Activated naive CD4-positive, alpha-beta T cell treated with anti-CD3 and anti-CD28 coated beads for 36 hours (primary cell): ENCODE measurements at regions of chr17 and their contacts with region 1.

Region 1: GRCh38 chr17:75182569-75183450 is at the start of gene SUMO2:
- DNase-seq: peak; percentile 97
- H3K4me3 Mint-ChIP-seq: peak within 1 kb of the TSS; percentile 92
- H3K27ac Mint-ChIP-seq: peak within 1 kb of the TSS; percentile 97
- H3K4me1 Mint-ChIP-seq: peaks cover 40% of the 10 kb centered on the region
- H3K27me3 Mint-ChIP-seq: no peaks in the 10 kb centered on the region
- total RNA-seq, gene SUMO2: 633 to 688 TPM

Region 2: DNA sequence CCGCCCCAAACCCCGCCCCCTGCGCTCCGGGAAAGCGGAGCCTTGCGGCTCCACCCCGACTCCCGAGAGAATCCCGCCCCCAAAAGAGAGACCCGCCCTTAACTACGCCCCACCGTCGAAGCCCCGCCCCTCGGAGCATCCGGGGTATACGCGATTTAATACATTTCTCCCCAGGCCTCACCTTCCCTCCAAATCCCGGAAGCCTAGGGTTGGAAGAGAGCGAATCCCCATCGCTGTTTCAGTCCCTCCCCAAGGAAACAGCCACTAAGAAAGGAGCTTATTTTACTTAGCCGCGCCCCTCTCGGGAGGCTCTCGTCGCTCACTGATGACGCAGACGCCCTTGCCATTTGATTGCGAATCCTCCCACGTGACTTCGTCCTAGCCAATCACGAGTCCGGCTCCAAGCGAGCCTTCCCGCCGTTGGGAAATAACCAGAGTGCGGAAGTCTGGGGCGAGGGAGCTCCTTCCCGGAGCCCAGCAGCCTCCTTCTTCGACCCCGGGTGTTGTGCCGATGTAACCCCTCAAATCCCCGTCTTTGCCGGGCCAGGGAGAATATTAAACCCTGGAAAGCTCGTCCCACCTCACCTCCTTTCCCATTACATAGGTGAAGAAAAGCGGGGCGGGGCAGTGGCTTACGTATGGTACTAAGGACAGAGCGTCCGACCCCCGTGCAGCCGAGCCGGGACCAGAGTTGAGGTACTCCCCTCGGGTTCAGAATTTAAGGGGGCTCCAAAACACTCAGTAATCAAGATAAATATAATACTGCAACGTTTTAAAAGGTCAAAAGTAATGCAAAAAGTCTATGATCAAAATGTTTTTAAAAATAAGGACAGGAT is 309.6 kb before region 1 on chr17:
- CTCF ChIA-PET with region 1: no interaction called
- intact Hi-C with region 1: loop called (anchors 1 kb)
- DNase-seq: peak; percentile 100
- H3K4me3 Mint-ChIP-seq: peak overlapping the region; percentile 88
- H3K27ac Mint-ChIP-seq: peak overlapping the region; percentile 91
- H3K4me1 Mint-ChIP-seq: peaks cover 27% of the 10 kb centered on the region
- H3K27me3 Mint-ChIP-seq: no peaks in the 10 kb centered on the region

Region 3: GRCh38 chr17:75046582-75047289 is 136.1 kb before region 1 on chr17 and contains the starts of genes ATP5PD and KCTD2:
- CTCF ChIA-PET with region 1: no interaction called
- intact Hi-C with region 1: loop called (anchors 5 kb)
- DNase-seq: peak; percentile 97
- H3K4me3 Mint-ChIP-seq: peak within 1 kb of the TSS; percentile 97
- H3K27ac Mint-ChIP-seq: peak within 1 kb of the TSS; percentile 89
- H3K4me1 Mint-ChIP-seq: peaks cover 47% of the 10 kb centered on the region
- H3K27me3 Mint-ChIP-seq: no peaks in the 10 kb centered on the region
- total RNA-seq, gene ATP5PD: 227 to 249 TPM
- total RNA-seq, gene KCTD2: 18.7 to 20.8 TPM

Region 4: DNA sequence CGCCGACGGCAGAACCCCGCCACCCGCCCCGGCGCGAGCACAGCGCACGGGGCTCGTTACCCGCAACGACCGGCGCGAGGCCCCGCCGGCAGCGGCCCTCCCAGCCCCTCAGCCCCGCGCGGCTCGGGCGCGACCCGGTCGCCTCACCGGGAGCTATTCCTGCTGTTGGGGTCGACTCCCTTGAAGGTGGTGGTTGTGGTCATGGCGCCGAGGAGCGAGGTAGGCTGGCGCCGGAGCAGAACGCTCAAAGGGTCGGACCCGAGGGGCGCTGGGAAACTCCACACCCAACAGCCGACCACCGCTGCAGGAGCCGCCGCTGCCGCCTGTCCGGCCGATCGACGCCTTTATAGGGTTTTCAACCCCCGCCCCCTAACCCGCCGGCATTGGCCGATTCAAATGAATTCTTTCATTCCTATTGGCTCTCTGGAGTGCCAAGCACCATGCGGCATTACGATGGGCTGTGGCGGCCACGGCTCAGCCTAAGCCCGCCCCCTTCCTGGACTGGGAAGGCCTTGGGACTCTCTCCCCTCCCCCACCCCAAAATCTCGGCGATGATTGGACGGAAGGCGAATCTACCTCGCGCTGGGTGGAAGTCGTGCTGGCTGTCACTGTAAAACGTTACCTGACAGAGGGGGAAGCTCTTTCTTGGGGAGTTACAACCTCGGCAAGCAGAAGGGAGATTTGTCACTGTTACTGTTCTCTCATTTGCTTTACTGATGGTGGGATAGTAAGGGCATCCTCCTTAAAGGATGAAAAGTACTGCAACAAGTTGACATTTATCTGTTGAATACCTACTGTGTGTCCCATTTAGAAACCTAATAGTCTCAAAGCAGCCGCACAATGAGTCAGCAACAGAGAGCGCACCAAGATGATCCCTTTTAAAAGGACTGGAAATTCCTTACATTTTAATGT is 28.4 kb before region 1 on chr17 and contains the start of gene JPT1:
- CTCF ChIA-PET with region 1: no interaction called
- intact Hi-C with region 1: loop called (anchors 1 kb)
- DNase-seq: peak; percentile 100
- H3K4me3 Mint-ChIP-seq: peak within 1 kb of the TSS; percentile 94
- H3K27ac Mint-ChIP-seq: peak within 1 kb of the TSS; percentile 78
- H3K4me1 Mint-ChIP-seq: peaks cover 30% of the 10 kb centered on the region
- H3K27me3 Mint-ChIP-seq: no peaks in the 10 kb centered on the region
- total RNA-seq, gene JPT1: 242 to 258 TPM

Region 5: GRCh38 chr17:75205037-75205792 is 22.4 kb after region 1 on chr17 and contains the start of gene NUP85:
- CTCF ChIA-PET with region 1: interaction called, 64 read pairs
- intact Hi-C with region 1: loop called (anchors 1 kb)
- DNase-seq: peak; percentile 94
- H3K4me3 Mint-ChIP-seq: peak within 1 kb of the TSS; percentile 98
- H3K27ac Mint-ChIP-seq: peak within 1 kb of the TSS; percentile 98
- H3K4me1 Mint-ChIP-seq: peaks cover 24% of the 10 kb centered on the region
- H3K27me3 Mint-ChIP-seq: no peaks in the 10 kb centered on the region
- total RNA-seq, gene NUP85: 112 to 116 TPM

Region 6: DNA sequence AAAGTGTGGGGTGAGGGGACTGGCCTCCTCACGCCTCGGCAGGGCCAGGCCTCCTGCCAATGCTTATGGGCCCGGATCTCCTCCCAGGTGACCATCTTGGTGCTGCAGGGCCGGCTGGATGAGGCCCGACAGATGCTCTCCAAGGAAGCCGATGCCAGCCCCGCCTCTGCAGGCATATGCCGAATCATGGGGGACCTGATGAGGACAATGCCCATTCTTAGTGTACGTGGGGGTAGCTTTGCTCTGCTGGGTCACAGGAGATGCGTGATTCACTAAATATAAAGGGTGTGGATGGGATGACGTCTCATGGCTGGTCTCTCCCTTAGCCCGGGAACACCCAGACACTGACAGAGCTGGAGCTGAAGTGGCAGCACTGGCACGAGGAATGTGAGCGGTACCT is 42.2 kb after region 1 on chr17:
- CTCF ChIA-PET with region 1: no interaction called
- intact Hi-C with region 1: no loop called
- DNase-seq: no peak
- H3K4me3 Mint-ChIP-seq: no peak overlapping the region
- H3K27ac Mint-ChIP-seq: no peak overlapping the region
- H3K4me1 Mint-ChIP-seq: peaks cover 8% of the 10 kb centered on the region
- H3K27me3 Mint-ChIP-seq: no peaks in the 10 kb centered on the region

Region 7: DNA sequence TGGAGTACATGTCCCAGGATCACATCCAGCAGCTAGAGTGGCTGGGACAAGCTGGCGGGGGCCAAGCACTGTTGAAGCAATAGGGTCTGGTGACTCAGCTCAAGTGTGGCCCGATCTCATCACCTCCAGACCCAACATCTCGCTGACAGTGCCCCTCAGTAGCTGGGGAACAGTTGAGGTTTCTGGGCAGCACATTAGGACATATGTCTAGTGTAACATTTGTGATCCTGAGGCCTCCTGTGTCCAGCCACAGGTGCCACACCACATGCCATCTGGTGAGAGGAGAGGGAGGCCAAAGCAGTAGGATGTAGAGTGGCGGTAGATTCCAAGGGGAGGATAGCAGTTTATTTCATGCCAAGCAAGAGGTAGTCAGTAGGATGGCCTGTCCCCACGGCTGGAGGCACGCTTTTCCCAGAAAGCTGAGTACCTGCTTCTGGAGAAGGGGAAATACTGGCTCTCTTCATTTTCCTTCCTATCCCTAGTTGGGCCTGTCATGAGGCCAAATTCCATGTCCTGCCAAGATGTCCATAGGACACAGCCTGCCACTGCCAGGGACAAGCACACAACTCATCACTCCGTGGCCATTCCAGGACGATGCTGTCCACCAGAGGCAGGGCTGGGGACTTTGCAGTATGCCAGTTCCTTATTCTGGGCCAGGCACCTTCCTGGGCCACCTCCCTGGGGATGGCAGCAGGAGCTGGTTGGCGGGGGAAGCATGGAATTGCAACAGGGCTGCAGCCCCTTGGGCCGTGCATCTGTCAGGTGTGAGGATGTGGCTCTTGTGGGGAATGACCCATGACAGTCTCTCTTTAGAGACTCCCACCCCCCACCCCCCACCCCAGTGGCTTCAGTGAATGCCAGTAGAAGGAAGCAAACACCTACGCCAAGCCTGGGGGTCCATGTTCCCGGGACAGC is 54.5 kb after region 1 on chr17:
- CTCF ChIA-PET with region 1: no interaction called
- intact Hi-C with region 1: no loop called
- DNase-seq: no peak
- H3K4me3 Mint-ChIP-seq: no peak overlapping the region
- H3K27ac Mint-ChIP-seq: peak overlapping the region; percentile 67
- H3K4me1 Mint-ChIP-seq: peaks cover 23% of the 10 kb centered on the region
- H3K27me3 Mint-ChIP-seq: no peaks in the 10 kb centered on the region

Region 8: DNA sequence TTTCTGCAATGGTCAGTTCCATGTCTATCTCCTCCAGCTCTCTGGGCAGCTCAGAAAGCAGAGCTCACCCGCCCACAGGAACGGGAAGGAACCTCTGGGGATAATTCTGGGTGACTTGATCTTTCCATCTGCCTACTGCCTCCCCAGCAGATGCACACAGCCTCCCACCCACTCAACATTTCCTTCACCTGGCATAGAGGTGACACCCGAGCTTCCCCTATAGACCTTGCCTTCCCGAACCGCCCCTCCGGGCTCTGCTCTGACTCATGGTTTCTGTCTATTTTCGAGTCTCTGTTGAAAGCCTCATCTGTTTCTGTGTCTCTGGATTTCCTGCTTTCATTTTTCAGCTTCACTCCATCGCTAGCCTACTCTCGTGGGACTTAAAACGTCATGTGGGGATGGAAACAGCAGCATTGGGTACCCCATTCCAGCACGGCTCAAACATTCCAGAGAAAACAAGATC is 67.2 kb after region 1 on chr17:
- CTCF ChIA-PET with region 1: no interaction called
- intact Hi-C with region 1: no loop called
- DNase-seq: peak; percentile 90
- H3K4me3 Mint-ChIP-seq: peak overlapping the region; percentile 61
- H3K27ac Mint-ChIP-seq: peak overlapping the region; percentile 93
- H3K4me1 Mint-ChIP-seq: peaks cover 74% of the 10 kb centered on the region
- H3K27me3 Mint-ChIP-seq: no peaks in the 10 kb centered on the region

Region 9: GRCh38 chr17:75784473-75785015 is 601.7 kb after region 1 on chr17 and contains the start of gene UNK:
- CTCF ChIA-PET with region 1: no interaction called
- intact Hi-C with region 1: loop called (anchors 10 kb)
- DNase-seq: peak; percentile 98
- H3K4me3 Mint-ChIP-seq: peak within 1 kb of the TSS; percentile 90
- H3K27ac Mint-ChIP-seq: peak within 1 kb of the TSS; percentile 100
- H3K4me1 Mint-ChIP-seq: peaks cover 51% of the 10 kb centered on the region
- H3K27me3 Mint-ChIP-seq: peaks cover 2% of the 10 kb centered on the region
- total RNA-seq, gene UNK: 19.1 to 21.4 TPM